Panc1 (cell line): ENCODE measurements at regions of chr17 and their contacts with region 1.

Region 1: DNA sequence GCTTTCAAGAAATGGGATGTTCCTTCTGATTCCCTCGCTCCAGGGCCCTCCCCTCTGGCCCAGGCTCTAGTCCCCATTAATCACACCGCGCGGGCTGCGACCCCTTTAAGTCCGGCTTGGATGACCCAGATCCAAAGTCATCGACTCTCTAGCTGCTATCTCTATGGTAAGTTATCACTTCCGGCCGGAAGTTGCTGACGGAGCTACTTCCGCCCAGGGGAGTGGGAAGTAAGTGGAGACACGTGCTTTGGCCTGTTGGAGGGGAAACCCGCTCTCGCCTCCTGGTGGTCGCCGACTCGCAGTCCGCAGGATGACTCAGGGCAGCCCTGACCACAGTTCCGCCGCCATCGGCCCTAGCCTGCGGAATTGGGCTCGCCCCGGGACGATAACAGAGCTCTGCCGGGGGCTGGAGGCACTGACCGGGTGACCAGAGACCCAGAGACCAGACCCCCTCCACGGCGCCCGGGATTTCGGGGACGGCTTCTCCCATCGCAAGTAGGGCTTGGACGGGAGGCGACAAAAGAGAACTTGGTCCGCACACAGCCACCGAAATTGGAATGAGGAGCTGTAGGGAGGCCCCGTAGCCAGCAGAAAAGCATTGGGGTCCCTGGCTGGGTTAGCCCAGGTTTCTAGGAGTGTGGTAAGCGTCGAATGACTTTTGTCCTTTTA is 52.2 kb upstream of the SEC14L1 start:
- DNase-seq: peak; percentile 86
- ATAC-seq: peak; percentile 91
- H3K4me3 ChIP-seq: peak overlapping the region; percentile 86 to 93
- H3K27ac ChIP-seq: peak overlapping the region; percentile 97
- H3K4me1 ChIP-seq: peaks cover 32% of the 10 kb centered on the region
- H3K27me3 ChIP-seq: no peaks in the 10 kb centered on the region
- CTCF ChIP-seq: peak; percentile 83

Region 2: DNA sequence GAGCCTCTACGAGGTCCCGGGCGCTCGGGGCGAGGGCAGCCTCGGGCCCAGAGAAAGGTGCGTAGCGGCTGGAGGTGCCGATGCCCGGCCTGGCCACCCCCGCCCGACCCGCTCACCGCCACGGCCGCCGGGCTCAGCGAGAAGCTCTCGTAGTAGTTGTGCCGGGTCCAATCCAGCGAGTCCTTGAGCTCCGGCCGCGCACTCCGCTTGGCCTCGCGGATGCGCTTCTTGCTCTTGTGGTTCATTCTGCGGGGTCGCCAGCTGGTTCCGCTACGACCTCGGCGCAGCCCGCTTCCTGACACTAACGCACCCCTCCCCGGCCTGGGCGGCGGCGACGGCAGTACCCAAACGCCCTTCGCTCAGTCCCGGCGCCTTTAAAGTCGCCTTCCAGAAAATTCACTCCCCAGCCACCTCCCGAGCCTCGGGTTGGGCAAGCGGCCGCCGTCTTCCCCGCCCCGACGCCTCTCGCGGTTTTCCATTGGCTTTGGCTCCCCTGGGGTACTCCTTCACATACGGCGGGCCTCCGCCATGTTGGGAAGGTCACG is 362.3 kb before region 1 on chr17 and contains the start of gene JMJD6:
- CTCF ChIA-PET with region 1: no interaction called
- POLR2A ChIA-PET with region 1: interaction called, 12 read pairs
- in situ Hi-C with region 1: no loop called
- intact Hi-C with region 1: no loop called
- DNase-seq: peak; percentile 69
- ATAC-seq: peak; percentile 95
- H3K4me3 ChIP-seq: peak within 1 kb of the TSS; percentile 79 to 92
- H3K27ac ChIP-seq: peak within 1 kb of the TSS; percentile 91
- H3K4me1 ChIP-seq: peaks cover 4% of the 10 kb centered on the region; the same call in 1 of the 2 replicates
- H3K27me3 ChIP-seq: no peaks in the 10 kb centered on the region
- CTCF ChIP-seq: no peak
- total RNA-seq, gene JMJD6: 60.0 TPM

Region 3: GRCh38 chr17:76968707-76969597 is 119.6 kb before region 1 on chr17:
- CTCF ChIA-PET with region 1: no interaction called
- POLR2A ChIA-PET with region 1: interaction called, 11 read pairs
- in situ Hi-C with region 1: no loop called
- intact Hi-C with region 1: no loop called
- DNase-seq: no peak
- ATAC-seq: peak; percentile 61
- H3K4me3 ChIP-seq: peak overlapping the region; percentile 32 to 55
- H3K27ac ChIP-seq: no peak overlapping the region
- H3K4me1 ChIP-seq: peaks cover 10% of the 10 kb centered on the region
- H3K27me3 ChIP-seq: no peaks in the 10 kb centered on the region; the same call in 1 of the 2 replicates
- CTCF ChIP-seq: no peak

Region 4: DNA sequence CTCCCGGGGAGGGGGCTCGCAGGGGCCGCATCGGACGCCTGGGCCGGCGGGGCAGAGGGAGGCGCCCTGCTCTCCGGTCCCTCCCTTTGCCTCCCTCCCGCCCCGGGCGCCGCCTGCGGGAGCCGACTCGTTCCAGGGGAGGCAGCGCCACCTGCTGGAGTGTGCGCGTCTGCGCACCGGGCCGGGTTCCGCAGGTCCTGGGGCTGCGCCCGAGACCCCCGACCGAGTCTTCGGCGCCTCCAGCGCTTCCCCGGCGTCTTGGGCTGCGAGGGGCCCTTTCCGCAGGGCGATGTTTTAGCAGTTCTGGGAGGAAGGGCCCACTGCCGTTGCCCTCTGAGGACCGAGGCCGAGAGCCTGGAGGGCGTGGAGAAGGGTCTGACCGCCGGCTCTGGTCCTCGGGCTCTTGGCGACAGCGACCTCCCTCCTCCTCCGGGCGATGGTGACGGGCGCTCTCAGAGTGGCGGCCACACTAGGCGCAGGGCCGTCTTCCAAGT is 158.5 kb after region 1 on chr17:
- CTCF ChIA-PET with region 1: no interaction called
- POLR2A ChIA-PET with region 1: no interaction called
- in situ Hi-C with region 1: no loop called
- intact Hi-C with region 1: loop called (anchors 1 kb)
- DNase-seq: peak; percentile 27
- ATAC-seq: peak; percentile 92
- H3K4me3 ChIP-seq: peak overlapping the region; percentile 43 to 58
- H3K27ac ChIP-seq: peak overlapping the region; percentile 81
- H3K4me1 ChIP-seq: peaks cover 12% of the 10 kb centered on the region; the same call in 1 of the 2 replicates
- H3K27me3 ChIP-seq: no peaks in the 10 kb centered on the region
- CTCF ChIP-seq: peak; percentile 99